GM10248 (cell line): ENCODE measurements at regions of chr17 and their contacts with region 1.

Region 1: DNA sequence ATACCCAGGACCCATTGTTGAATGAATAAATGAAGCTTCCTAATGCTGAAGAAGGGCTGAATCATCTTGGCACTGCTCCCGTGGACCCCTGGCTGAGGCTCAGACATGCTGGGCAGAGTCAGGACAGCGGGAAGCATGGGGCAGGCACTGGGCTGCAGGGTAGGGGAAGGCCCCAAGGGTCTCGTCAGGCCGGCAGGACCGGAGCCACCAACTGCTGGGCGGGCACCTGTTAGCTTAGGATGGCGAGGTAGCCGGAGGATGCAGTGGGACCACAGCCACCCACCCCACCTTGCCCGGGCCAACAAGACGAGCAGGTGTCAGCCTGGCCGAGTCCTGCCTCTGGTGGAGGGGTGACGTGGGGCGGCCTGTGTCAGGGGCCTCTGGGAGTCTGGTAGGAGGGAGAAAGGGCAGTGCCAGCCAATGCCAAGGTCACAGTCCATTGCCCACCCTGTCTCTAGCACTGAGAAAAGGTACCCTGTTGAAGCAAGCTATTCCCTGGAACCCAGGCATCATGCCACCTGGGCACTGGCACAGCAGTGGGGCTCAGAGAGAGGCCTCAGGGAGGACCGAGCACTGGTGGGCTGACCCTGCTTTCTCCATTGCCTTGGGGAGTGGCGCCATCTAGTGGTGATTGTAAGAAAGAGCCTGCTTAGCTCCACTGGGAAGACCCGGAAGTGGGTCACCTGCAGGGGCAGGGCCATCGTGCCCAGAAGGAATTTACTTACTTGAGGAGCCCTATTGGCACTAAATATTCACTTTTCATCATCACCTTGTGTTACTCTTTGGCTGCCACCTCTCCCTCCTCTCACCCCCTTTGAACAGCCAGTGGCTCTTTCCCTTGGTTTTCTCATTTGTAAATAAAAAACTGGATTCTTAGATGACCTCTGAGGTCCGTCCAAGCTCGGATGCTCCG is 3.0 kb upstream of the DLX3 start:
- DNase-seq: peak; percentile 90
- CTCF ChIP-seq: peak; percentile 85

Region 2: GRCh38 chr17:49063652-49064051 is 934.4 kb before region 1 on chr17:
- CTCF ChIA-PET with region 1: no interaction called
- POLR2A ChIA-PET with region 1: no interaction called
- DNase-seq: no peak
- CTCF ChIP-seq: no peak

Region 3: DNA sequence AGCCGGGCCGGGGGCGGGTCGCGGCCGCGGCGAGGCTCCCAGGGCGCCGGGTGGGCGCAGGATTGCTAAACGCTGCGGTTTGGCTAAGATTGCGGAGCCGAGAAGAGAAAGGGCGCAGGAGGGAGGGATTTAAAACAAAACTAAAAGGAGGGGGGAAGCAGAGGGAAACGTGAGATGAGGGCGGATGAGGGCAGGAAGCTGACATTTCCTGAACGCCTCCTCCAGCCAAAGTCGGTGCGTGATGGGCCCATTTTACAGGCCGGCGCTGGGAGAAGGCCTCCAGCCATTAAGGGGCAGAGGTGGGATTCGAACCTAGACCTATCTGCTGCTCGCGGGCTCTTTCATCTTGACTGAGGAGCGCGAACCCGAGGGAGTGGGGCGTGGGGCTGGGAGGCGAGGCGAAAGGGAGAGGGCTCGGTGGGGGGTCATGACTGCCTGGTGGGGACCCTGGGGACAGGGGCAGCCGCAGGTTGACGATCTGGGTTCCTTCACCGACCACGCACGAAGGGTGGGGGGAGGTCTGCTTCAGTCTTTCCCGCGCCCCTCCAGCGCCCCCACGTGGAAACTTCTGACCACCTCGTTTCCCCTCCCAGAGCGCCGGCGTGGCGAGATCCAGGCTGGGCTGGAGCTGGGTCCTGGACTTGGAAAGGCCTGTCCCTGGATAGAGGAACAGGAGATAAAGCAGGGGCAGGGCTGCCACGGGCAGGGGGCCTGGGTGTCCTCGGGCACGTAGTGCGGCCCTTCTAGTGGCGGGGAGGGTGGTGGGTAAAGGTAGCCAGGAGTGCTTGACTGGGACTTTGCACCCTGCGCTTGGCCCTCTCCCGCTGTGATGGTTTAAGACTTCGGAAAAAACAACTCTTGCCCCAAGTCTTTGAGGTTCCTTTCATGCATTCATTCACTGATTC is 146.4 kb before region 1 on chr17:
- CTCF ChIA-PET with region 1: interaction called, 171 read pairs
- POLR2A ChIA-PET with region 1: no interaction called
- DNase-seq: peak; percentile 69
- CTCF ChIP-seq: peak; percentile 61

Region 4: DNA sequence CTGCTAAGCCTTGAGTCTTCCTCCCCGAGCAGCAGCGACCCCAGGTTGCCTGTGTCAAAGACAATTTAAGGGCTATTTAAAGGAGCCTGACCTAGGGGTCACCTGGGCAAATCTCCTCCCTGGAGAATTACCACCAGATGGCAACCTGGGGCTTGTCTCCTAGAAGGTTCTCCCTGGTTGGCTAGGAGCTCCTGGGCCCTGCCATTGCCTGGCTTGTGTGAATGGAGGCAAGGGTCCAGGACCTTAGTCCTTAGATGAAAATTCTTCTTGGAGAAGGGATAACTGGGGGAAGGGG is 98.9 kb before region 1 on chr17:
- CTCF ChIA-PET with region 1: interaction called, 10 read pairs
- POLR2A ChIA-PET with region 1: no interaction called
- DNase-seq: no peak
- CTCF ChIP-seq: no peak

Region 5: GRCh38 chr17:49971848-49972485 is 26.1 kb before region 1 on chr17:
- CTCF ChIA-PET with region 1: interaction called, 47 read pairs
- POLR2A ChIA-PET with region 1: no interaction called
- DNase-seq: no peak
- CTCF ChIP-seq: no peak

Region 6: GRCh38 chr17:50020841-50021599 is 23.0 kb after region 1 on chr17:
- CTCF ChIA-PET with region 1: interaction called, 21 read pairs
- POLR2A ChIA-PET with region 1: no interaction called
- DNase-seq: no peak
- CTCF ChIP-seq: no peak